ENCODE measurements at regions of chr1 and their contacts with region 1.

Region 1: DNA sequence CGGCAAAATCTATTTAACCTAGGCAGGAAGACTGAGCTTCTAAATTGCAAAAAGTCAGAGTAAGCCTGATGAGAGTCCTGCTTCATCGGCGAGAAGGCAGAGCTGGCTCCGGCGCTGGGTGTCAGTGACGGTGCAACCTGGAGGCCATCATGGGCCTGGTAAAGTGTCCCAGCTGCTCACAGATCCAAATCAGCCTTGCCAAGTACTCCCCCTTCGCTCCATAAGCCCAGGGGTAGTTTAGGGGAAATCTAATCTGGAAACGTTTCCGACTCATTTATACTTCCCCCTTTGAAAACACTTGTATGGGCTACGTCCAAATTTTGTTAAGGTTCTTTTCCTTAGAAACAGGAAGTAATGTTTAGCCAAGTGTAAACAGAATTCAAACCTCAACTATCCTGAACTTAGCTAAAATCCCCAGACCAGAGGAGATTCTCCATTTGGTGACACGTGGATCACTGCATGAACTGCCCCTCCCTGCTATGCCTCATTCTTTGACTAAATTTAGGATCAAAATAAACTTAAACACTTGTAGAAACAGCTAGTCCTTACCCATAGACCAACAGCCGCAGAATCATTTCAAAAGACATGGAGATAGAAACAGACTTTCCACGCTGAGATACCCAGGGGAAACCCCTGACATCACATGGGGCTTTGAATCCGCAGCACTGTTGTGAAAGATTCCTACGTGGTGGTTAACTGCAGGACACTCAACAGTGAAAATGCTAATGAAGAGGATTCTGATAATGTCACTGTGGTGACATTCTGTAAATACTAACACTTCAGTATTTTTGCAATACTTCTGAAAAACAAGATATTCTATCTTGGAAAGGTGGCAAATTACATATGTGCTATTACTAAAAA is 172.7 kb downstream of the TGFBR3 start:
- DNase-seq: peak; percentile 71
- H3K4me3 Mint-ChIP-seq: no peak overlapping the region
- H3K27ac Mint-ChIP-seq: peak overlapping the region; percentile 73
- H3K4me1 Mint-ChIP-seq: peaks cover 25% of the 10 kb centered on the region
- H3K27me3 Mint-ChIP-seq: no peaks in the 10 kb centered on the region

Region 2: DNA sequence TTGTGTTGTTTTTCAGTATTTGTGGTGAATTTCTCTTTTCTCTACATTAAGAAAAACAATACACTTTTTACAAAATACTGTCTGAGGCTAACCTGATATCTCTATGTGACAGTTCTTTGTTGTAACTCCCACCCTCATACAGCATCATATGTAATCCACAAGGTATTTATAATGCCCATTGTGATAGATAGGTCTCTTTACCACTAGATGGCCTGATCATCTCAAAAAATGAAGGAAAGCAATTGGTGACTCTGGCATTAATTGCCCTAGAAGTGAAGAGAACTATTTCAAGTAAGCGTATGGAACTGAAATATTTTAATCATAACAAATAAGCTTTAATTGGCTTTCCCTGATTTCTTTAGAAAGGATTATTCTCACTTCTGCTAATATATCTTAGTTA is 272.4 kb before region 1 on chr1:
- CTCF ChIA-PET with region 1: no interaction called
- intact Hi-C with region 1: no loop called
- DNase-seq: no peak
- H3K4me3 Mint-ChIP-seq: no peak overlapping the region
- H3K27ac Mint-ChIP-seq: no peak overlapping the region
- H3K4me1 Mint-ChIP-seq: peaks cover 7% of the 10 kb centered on the region
- H3K27me3 Mint-ChIP-seq: peaks cover 16% of the 10 kb centered on the region

Region 3: DNA sequence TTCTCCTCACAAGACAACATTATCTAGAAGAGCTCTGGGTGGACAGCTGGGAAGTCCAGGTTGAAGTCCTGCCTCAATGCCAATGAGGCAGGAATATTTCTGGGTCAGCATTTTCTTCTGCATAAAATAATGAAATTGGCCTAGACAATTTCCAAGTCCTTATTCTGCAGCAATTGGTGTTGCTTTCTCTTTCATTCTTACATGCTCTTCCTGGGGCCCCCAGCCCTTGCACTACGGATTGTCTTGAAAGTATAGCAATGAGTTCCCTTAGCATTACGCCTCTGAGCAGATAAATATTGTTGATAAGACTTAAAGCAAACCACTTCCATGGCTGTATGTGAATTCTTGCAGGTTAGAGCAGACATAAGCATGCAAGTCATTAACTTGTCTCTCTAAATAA is 15.8 kb before region 1 on chr1:
- CTCF ChIA-PET with region 1: interaction called, 3 read pairs
- intact Hi-C with region 1: loop called (anchors 1 kb)
- DNase-seq: peak; percentile 77
- H3K4me3 Mint-ChIP-seq: peak overlapping the region; percentile 30
- H3K27ac Mint-ChIP-seq: peak overlapping the region; percentile 51
- H3K4me1 Mint-ChIP-seq: peaks cover 28% of the 10 kb centered on the region
- H3K27me3 Mint-ChIP-seq: no peaks in the 10 kb centered on the region

Region 4: DNA sequence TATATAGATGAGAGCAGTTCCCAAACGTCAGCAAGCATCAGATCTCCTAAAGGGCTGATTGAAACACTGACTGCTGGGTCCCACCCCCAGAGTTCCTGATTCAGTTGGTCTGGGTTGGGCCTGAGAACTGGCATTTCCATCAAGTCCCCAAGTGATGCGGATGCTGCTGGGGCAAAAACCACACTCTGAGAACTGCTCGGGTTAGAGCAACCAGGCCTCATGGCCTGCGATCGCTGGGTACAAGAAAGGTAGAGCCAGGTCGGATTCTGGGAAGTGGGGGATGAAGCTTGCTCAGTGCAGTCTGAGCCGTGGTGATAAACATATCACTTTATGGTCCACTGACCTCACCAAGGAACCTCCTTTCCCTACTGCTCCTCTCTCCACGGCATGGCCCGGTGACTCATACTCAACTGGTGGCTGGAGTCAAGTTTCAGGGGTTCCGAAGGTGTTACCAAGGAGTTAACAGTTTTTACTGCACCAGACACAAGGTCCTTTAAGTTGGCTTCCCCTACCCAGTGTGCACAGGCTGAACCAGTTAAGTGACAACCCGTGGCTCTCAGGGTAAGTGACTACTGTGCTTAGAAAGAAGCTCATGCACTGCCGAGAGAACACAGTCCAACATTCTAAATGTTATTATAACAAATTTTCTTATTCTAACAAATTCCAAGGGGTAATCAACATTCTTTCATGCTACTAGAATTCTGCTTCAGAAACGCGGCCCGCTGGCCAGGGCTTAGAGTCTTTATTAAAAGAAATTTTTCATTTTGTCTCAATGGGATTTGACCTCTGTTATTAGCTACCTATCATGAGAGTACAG is 19.3 kb after region 1 on chr1:
- CTCF ChIA-PET with region 1: no interaction called
- intact Hi-C with region 1: loop called (anchors 1 kb)
- DNase-seq: peak; percentile 24
- H3K4me3 Mint-ChIP-seq: no peak overlapping the region
- H3K27ac Mint-ChIP-seq: peak overlapping the region; percentile 64
- H3K4me1 Mint-ChIP-seq: peaks cover 30% of the 10 kb centered on the region
- H3K27me3 Mint-ChIP-seq: no peaks in the 10 kb centered on the region

Region 5: GRCh38 chr1:91830242-91831131 is 117.3 kb after region 1 on chr1:
- CTCF ChIA-PET with region 1: no interaction called
- intact Hi-C with region 1: no loop called
- DNase-seq: no peak
- H3K4me3 Mint-ChIP-seq: no peak overlapping the region
- H3K27ac Mint-ChIP-seq: no peak overlapping the region
- H3K4me1 Mint-ChIP-seq: peaks cover 18% of the 10 kb centered on the region
- H3K27me3 Mint-ChIP-seq: no peaks in the 10 kb centered on the region

Region 6: DNA sequence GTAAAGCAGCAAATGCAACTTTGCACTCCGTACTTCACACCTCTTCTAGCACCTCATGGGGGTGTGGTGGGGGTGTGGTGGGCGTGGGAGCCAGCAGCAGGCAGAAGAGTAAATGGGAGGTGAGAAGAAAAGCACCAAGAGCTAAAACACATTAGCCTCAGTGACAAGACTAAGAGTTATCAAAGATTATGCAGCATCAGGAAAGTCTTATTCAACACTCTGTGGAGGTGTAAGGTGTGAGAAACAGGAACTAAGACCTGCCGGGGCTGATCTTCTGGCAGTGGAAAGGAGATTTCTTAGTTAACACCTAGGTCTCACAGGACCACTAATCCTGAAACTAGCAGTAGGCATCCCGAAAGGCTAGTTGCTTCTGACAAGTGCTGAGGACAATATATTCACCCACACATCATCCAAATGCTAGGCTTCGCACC is 162.8 kb after region 1 on chr1:
- CTCF ChIA-PET with region 1: no interaction called
- intact Hi-C with region 1: loop called (anchors 1 kb)
- DNase-seq: peak; percentile 61
- H3K4me3 Mint-ChIP-seq: no peak overlapping the region
- H3K27ac Mint-ChIP-seq: peak overlapping the region; percentile 5
- H3K4me1 Mint-ChIP-seq: peaks cover 74% of the 10 kb centered on the region
- H3K27me3 Mint-ChIP-seq: no peaks in the 10 kb centered on the region